CD8-positive, alpha-beta T cell (primary cell): ENCODE measurements at regions of chr11 and their contacts with region 1.

Region 1: DNA sequence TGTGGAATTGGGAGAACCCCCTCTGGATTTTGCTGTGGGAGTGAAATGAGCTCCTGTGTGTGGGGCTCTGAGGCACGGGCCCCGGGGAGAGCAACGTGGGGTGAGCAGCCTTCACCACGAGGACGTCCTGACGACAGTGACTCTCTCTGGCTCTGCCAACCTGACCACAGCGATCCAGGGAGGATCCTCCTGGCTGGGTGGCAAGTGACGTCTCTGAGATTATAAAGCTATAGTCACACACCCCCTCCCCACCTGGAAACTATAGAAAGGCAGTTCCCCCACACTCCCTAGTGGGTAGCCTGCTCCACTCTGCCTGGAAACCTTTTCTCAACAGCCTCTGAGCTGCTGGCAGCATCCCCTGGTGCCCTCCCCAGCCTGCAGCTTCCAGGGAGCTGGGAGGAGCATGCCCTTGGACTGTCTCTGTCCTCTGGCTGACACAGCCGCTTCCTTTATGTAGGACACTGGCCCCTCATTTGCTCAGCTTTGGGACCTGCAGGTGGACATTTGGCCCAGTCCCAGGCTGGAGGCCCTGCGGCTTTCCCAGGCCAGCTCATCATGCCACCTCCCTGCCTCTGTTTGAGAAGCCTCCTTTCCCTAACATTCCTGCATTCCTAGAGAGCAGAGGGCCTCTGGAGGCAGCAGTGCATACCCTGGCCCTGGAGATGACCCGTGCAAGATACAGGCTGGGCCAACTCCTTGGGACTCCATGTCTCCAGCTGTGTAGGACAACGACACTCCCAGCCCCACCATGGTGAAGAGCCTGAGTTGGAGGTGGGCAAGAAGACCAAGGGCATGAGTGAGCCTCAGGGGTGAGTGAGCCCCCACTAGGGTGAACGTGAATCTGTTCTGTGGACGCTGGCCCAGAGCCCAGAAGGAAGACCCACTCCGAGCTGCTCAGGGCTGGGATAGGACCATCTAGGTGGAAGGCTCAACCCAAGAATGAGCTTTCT is 314.0 kb downstream of the NTM start:
- DNase-seq: no peak
- ATAC-seq: no peak
- H3K4me3 ChIP-seq: no peak overlapping the region
- H3K4me3 Mint-ChIP-seq: no peak overlapping the region
- H3K27ac ChIP-seq: no peak overlapping the region
- H3K27ac Mint-ChIP-seq: no peak overlapping the region
- H3K4me1 ChIP-seq: no peaks in the 10 kb centered on the region
- H3K4me1 Mint-ChIP-seq: no peaks in the 10 kb centered on the region
- H3K27me3 ChIP-seq: peaks cover 0 to 2% of the 10 kb centered on the region in 2 experiments
- H3K27me3 Mint-ChIP-seq: peaks cover 8% of the 10 kb centered on the region
- CTCF ChIP-seq: no peak

Region 2: DNA sequence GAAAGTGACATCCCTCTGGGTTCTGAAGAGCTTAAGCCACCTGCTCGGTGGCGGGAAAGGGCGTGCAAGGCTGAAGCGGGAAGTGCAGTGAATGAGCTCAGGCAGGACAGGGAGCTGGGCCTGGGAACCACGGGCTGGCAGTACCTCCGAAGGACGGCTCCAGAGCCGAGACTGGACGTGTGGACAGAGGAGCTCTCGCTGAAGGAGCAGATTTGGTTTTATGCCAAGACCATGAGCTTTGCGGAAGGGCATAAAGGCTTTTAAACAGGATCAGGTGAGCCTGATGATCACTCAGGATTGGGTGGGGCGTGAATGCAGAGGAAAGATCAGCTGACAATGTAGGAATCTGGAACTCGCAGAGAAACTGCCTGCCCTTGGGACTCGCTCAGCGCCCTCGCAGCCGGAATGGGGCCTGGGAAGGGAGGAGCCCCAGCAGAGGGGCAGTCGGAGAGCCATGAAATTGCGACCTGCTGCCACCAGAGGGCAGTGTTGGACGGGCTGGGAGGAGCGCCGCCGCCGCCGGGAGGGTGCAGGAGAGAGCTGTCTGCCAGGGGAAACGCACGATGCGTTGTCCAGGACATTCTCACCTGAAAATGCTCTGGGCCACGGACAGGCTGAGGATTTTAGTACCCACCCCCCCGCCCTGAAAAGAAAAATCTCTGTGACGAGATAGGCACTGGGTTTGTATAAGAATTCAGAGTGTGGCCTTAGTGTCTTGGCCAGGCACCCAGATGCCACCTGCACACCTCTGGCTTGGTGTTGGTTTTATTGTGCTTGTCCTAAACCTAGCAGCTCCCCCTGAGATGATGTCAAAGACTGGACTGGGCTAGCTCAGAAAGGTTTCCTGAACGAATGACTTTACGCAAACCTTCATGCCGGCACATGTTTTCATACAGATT is 10.4 kb after region 1 on chr11:
- CTCF ChIA-PET with region 1: interaction called, 11 read pairs
- POLR2A ChIA-PET with region 1: no interaction called
- intact Hi-C with region 1: no loop called
- DNase-seq: peak in 6 of 9 experiments; percentile 26 to 50 (median 37)
- ATAC-seq: no peak
- H3K4me3 ChIP-seq: no peak overlapping the region
- H3K4me3 Mint-ChIP-seq: no peak overlapping the region
- H3K27ac ChIP-seq: no peak overlapping the region
- H3K27ac Mint-ChIP-seq: no peak overlapping the region
- H3K4me1 ChIP-seq: no peaks in the 10 kb centered on the region
- H3K4me1 Mint-ChIP-seq: peaks cover 3% of the 10 kb centered on the region
- H3K27me3 ChIP-seq: no peaks in the 10 kb centered on the region
- H3K27me3 Mint-ChIP-seq: peaks cover 43% of the 10 kb centered on the region
- CTCF ChIP-seq: peak; percentile 53